ENCODE measurements at regions of chr6 and their contacts with region 1.

Region 1: DNA sequence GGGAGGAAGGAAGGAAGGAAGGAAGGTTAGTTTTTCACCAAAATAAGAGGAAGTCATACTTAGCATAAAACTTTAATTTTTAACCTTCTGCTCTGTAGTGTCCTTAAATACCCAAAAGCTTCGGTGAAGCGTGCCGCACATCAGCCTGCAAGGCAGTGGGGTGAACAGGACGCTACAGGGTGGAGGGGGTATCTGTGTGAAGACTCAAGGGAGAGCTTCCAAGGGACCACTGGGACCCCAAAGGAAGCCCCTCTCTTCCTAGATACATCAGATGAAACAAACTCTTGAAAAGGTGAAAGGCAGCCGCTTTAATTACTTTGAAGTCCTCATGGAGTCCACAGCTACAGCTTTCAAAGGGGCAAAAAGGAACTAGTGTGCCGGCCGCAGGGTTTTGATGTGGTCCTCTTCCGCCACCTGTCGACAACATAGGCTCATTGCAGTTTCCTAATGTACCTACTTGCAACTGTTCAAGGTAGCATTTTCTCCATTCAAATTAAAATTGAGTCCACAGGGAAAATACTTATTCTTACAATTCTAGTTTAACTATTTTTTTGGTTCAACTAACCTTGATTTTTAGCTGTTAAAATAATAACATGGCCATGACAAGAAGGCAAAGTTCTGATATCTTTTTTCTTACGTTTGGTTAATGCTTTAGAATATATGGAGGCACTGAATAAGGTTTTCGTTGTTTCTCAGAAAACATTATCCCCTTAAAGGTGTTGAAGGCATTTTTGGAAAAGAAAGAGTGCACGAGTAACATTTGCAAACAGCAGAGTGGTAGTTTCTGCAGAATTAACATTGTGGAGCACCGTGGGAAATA is 135.0 kb upstream of the RIPOR2 start:
- DNase-seq: peak; percentile 54
- H3K4me3 ChIP-seq: no peak overlapping the region
- H3K27ac ChIP-seq: no peak overlapping the region
- H3K4me1 ChIP-seq: no peaks in the 10 kb centered on the region
- H3K27me3 ChIP-seq: no peaks in the 10 kb centered on the region
- CTCF ChIP-seq: peak; percentile 90 to 91

Region 2: GRCh38 chr6:24699521-24700359 is 371.0 kb before region 1 on chr6:
- CTCF ChIA-PET with region 1: no interaction called
- dilution Hi-C with region 1: no loop called
- in situ Hi-C with region 1: no loop called
- intact Hi-C with region 1: loop called (anchors 5 kb)
- DNase-seq: no peak
- H3K4me3 ChIP-seq: no peak overlapping the region
- H3K27ac ChIP-seq: no peak overlapping the region
- H3K4me1 ChIP-seq: no peaks in the 10 kb centered on the region
- H3K27me3 ChIP-seq: no peaks in the 10 kb centered on the region
- CTCF ChIP-seq: no peak

Region 3: GRCh38 chr6:24831771-24832716 is 238.7 kb before region 1 on chr6:
- CTCF ChIA-PET with region 1: no interaction called
- dilution Hi-C with region 1: loop called (anchors 25 kb)
- in situ Hi-C with region 1: no loop called
- intact Hi-C with region 1: no loop called
- DNase-seq: no peak
- H3K4me3 ChIP-seq: no peak overlapping the region
- H3K27ac ChIP-seq: no peak overlapping the region
- H3K4me1 ChIP-seq: peaks cover 14% of the 10 kb centered on the region
- H3K27me3 ChIP-seq: no peaks in the 10 kb centered on the region
- CTCF ChIP-seq: no peak

Region 4: GRCh38 chr6:24991810-24992467 is 78.8 kb before region 1 on chr6:
- CTCF ChIA-PET with region 1: no interaction called
- dilution Hi-C with region 1: no loop called
- in situ Hi-C with region 1: no loop called
- intact Hi-C with region 1: loop called (anchors 1 kb)
- DNase-seq: peak; percentile 38
- H3K4me3 ChIP-seq: no peak overlapping the region
- H3K27ac ChIP-seq: no peak overlapping the region
- H3K4me1 ChIP-seq: peaks cover 2% of the 10 kb centered on the region
- H3K27me3 ChIP-seq: no peaks in the 10 kb centered on the region
- CTCF ChIP-seq: peak; percentile 63 to 84

Region 5: DNA sequence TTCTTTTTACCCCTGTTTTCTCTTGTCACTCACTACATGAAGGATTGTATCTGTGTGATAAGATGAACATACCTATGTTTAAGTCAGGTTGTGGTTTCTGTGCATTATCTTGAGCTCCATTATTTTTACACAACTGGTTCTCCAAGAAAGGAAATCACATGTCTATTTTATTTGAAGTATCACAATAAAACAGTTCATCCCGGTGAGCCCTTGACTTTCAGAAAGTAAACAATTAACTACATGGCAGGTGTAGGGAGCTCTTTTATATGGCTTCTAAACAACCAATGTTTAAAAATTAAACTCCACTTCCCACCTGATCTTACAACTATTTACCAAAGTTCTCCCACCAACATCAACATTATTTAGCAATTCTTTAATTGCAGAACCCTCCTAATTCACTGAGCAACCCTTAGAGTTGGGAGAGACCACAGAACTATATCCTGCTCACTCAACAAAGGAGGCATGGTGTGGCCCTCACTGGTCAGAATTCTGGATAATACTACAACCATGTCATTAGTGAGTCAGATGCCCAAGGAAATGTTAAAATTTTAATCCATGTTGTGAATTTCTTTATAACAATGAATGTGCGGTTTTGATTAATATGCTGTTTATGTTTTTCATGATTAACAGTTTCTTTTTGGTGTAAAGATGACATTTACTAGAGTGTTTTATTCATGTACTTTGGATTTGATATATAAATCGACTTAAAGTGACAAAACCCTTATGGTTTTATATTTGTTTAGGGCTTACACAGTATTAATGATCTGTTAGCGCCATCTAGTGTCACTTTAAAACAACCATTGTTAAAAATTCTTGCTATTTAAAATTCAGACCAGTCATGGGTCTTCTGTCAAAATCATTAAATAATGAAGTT is 531.3 kb after region 1 on chr6:
- CTCF ChIA-PET with region 1: no interaction called
- dilution Hi-C with region 1: no loop called
- in situ Hi-C with region 1: no loop called
- intact Hi-C with region 1: loop called (anchors 10 kb)
- DNase-seq: peak; percentile 12
- H3K4me3 ChIP-seq: no peak overlapping the region
- H3K27ac ChIP-seq: no peak overlapping the region
- H3K4me1 ChIP-seq: no peaks in the 10 kb centered on the region
- H3K27me3 ChIP-seq: no peaks in the 10 kb centered on the region
- CTCF ChIP-seq: peak; percentile 44 to 50